Right ventricle myocardium inferior (tissue), 1 donor: ENCODE measurements at regions of chr5 and their contacts with region 1.

Region 1: DNA sequence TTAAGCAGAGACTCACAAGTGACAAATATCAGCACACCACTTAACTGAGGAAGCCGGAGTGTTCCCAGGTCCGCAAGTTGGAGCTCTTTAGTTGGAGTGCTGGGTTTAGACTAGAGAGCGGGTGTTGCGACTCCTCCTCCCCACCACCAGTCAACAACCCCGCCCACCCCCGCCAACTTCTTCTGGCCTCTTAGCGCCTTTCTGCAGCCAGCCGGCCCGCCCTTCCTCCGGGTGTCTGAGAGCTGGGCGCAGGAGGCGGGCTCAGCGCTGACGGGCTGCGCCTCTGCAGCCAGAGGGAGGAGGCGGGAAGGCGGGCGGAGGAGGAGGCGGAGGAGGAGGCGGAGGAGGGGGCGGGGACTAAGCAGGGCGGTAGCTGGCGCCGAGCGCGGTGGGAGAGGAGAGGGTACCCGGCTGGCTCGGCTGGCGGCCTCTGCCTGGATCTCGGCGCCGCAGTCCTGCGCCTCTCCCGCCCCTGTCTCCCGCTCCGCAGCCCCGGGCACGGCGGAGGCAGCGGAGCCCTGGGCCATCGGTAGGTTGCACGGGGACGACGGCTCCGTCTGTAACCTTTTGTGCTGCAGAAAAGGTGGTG is at the start of gene MACIR:
- DNase-seq: peak; percentile 99
- ATAC-seq: peak; percentile 98
- total RNA-seq, gene MACIR: 4.3 TPM

Region 2: GRCh38 chr5:103475629-103476240 is 217.3 kb after region 1 on chr5:
- intact Hi-C with region 1: loop called (anchors 2 kb)
- DNase-seq: no peak
- ATAC-seq: no peak

Region 3: DNA sequence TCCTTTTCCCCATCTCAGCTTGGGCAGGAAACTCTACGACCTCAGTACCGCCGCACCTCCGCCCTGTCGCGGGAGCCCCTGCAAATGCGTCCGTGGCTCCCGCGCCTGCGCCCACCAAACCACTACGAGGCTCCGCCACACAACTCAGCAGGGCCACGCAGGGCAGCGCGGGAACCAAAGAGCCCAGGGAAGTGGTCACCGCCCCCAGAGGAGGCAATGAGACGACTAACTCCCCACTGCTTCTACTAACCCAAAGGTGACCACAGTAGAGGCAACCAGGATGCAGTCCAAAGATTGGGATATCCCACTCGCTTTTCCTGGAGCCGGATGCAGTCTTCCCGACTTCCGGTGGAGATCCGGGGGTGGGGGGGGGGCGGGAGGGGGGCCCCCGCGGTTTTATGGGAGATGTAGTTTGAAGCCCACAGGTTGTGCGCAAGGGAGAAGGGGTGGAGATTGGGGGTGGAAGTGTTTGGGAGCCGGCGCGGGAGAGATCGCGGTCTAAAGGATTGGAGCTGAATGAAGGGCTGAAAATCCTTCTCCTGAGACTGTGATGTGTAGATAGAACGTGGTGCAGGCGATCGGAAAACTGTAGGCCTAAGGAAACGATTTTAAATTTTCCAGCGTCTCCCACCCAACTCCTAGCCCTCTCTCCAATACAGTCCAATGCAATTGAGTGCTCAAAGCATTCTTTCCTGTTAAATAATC is 304.1 kb after region 1 on chr5 and contains the start of gene NUDT12:
- intact Hi-C with region 1: loop called (anchors 10 kb)
- DNase-seq: peak; percentile 81
- ATAC-seq: peak; percentile 94
- total RNA-seq, gene NUDT12: 10.4 TPM